ENCODE measurements at regions of chr17 and their contacts with region 1.

Region 1: GRCh38 chr17:39621523-39622379 is 5.0 kb upstream of the PPP1R1B start:
- DNase-seq: peak; percentile 87
- H3K4me3 ChIP-seq: no peak overlapping the region
- H3K27ac ChIP-seq: no peak overlapping the region
- H3K4me1 ChIP-seq: peaks cover 10% of the 10 kb centered on the region
- H3K27me3 ChIP-seq: peaks cover 24 to 26% of the 10 kb centered on the region in 2 experiments
- CTCF ChIP-seq: peak; percentile 100
- POLR2A ChIP-seq: no peak

Region 2: DNA sequence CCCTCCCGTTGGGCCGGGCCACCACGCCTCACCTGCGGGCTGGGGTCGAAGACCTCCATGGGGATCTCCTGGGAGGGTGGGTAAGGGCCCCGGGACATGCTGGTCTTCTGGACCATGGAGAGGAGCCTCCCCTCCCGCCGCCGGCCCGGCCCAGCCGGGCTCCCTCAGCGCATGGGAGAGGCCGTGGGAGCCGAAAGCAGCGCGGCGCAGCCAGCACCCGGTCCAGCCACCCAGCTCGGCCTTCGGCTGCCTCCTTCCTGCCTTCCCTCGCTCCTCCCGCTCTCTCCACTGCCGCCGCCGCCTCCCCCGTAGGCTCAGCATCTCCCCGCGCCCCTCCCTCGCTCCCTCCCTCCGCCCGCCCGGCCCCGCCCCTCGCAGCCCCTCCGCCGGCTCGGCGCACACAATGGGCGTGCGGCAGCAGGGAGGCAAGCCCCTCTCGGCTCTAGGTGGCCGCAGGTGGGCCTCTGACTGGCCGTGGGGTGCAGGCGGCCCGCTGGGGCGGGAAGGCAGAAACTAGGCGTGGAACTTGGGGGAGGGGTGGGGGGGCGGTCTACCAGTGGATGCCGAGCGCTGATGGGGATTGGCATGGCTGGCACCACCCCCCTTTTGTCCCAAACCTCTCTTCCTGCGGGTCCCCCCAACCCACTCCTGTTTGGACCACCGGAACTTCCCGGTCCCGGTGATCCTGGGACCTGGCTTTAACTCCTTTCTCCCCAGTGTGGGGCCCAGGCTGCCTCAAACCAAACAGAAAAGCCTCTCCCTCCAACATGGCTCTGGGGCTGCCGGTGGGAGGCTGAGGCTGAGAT is 424.2 kb before region 1 on chr17 and contains the start of gene CACNB1:
- CTCF ChIA-PET with region 1: no interaction called
- POLR2A ChIA-PET with region 1: no interaction called
- dilution Hi-C with region 1: no loop called
- intact Hi-C with region 1: no loop called
- DNase-seq: peak; percentile 69
- H3K4me3 ChIP-seq: peak within 1 kb of the TSS; percentile 58 to 74 (median 61)
- H3K27ac ChIP-seq: no peak within 1 kb of the TSS
- H3K4me1 ChIP-seq: peaks cover 23% of the 10 kb centered on the region
- H3K27me3 ChIP-seq: no peaks in the 10 kb centered on the region
- CTCF ChIP-seq: no peak
- POLR2A ChIP-seq: no peak
- total RNA-seq, gene CACNB1: 12.3 and 14.6 TPM in 2 replicates

Region 3: GRCh38 chr17:39538866-39539265 is 82.9 kb before region 1 on chr17:
- CTCF ChIA-PET with region 1: interaction called, 10 read pairs
- POLR2A ChIA-PET with region 1: no interaction called
- dilution Hi-C with region 1: no loop called
- intact Hi-C with region 1: no loop called
- DNase-seq: no peak
- H3K4me3 ChIP-seq: no peak overlapping the region
- H3K27ac ChIP-seq: no peak overlapping the region
- H3K4me1 ChIP-seq: peaks cover 10% of the 10 kb centered on the region
- H3K27me3 ChIP-seq: no peaks in the 10 kb centered on the region
- CTCF ChIP-seq: no peak
- POLR2A ChIP-seq: no peak

Region 4: GRCh38 chr17:39579318-39580081 is 42.3 kb before region 1 on chr17:
- CTCF ChIA-PET with region 1: interaction called, 23 read pairs
- POLR2A ChIA-PET with region 1: no interaction called
- dilution Hi-C with region 1: no loop called
- intact Hi-C with region 1: loop called (anchors 2 kb)
- DNase-seq: peak; percentile 39
- H3K4me3 ChIP-seq: no peak overlapping the region
- H3K27ac ChIP-seq: no peak overlapping the region
- H3K4me1 ChIP-seq: peaks cover 3% of the 10 kb centered on the region
- H3K27me3 ChIP-seq: peaks cover 8 to 10% of the 10 kb centered on the region in 2 experiments
- CTCF ChIP-seq: no peak
- POLR2A ChIP-seq: no peak

Region 5: GRCh38 chr17:39643271-39643670 is 21.5 kb after region 1 on chr17:
- CTCF ChIA-PET with region 1: interaction called, 114 read pairs
- POLR2A ChIA-PET with region 1: no interaction called
- dilution Hi-C with region 1: no loop called
- intact Hi-C with region 1: no loop called
- DNase-seq: peak; percentile 28
- H3K4me3 ChIP-seq: no peak overlapping the region
- H3K27ac ChIP-seq: no peak overlapping the region
- H3K4me1 ChIP-seq: peaks cover 11% of the 10 kb centered on the region
- H3K27me3 ChIP-seq: no peaks in the 10 kb centered on the region
- CTCF ChIP-seq: no peak
- POLR2A ChIP-seq: no peak

Region 6: DNA sequence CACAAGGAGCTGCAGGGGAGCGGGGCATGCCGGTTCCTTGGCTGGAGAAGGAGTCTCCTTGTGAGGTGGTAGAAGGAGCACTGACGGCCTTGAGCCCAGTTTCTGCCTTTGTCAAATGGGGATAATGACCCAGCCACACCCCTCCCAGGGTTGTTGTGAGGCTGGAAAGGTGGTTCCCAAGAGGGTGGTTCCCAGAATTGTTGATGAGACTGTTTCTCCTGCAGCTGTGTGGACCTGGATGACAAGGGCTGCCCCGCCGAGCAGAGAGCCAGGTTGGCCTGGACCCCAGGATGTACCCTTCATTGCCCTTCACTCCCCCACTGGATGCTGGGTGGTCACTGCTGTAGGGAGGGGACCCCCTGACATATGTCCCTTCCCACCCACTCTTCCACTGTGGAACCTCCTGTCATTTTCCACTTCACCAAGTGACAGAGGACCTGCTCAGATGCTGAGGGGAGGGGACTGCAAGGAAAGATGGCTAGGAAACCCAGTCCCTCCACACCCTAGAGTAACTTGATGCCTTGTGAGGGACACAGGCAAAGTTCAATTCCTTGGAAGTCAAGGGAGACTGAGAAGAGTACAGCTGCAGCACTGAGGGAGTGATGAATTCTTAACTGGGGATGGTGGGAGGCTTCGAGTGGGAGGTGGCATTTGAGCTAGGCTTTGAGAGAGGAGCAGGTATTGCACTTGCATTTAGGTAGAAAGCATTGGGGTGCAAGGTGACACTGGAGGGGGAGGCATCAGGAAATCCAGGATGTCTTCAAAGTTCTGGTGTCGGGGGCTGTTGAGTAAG is 98.0 kb after region 1 on chr17:
- CTCF ChIA-PET with region 1: interaction called, 25 read pairs
- POLR2A ChIA-PET with region 1: no interaction called
- dilution Hi-C with region 1: no loop called
- intact Hi-C with region 1: no loop called
- DNase-seq: no peak
- H3K4me3 ChIP-seq: no peak overlapping the region
- H3K27ac ChIP-seq: no peak overlapping the region
- H3K4me1 ChIP-seq: peaks cover 19% of the 10 kb centered on the region
- H3K27me3 ChIP-seq: no peaks in the 10 kb centered on the region
- CTCF ChIP-seq: no peak
- POLR2A ChIP-seq: no peak

Region 7: DNA sequence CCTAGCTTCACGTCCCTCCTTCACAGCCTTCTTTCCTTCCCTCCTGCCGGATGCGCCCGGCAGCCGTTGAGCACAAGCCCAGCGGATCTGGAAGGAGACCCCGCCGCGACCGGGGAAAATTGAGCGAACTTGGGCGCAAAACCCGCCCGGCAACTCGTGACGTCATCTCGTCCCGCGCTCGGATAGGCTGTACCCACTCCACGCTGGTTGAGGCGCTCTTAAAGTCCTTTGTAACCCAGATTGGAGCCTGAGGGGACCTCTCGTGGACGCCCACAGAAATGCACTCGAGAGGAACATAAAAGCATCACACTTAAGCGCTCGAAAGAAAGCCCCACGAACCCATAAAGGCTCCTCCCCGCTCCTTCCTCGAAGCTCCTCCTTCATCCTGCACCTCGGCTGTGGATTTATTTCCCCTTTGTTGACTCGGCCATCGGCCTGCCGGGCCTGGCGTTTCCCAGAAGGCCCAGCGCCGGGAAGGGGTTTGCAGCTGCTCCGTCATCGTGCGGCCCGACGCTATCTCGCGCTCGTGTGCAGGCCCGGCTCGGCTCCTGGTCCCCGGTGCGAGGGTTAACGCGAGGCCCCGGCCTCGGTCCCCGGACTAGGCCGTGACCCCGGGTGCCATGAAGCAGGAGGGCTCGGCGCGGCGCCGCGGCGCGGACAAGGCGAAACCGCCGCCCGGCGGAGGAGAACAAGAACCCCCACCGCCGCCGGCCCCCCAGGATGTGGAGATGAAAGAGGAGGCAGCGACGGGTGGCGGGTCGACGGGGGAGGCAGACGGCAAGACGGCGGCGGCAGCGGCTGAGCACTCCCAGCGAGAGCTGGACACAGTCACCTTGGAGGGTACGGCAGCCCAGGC is 358.8 kb after region 1 on chr17 and contains the start of gene PSMD3:
- CTCF ChIA-PET with region 1: interaction called, 10 read pairs
- POLR2A ChIA-PET with region 1: no interaction called
- dilution Hi-C with region 1: no loop called
- intact Hi-C with region 1: loop called (anchors 1 kb)
- DNase-seq: peak; percentile 100
- H3K4me3 ChIP-seq: peak within 1 kb of the TSS; percentile 84 to 100 (median 87)
- H3K27ac ChIP-seq: peak within 1 kb of the TSS; percentile 87
- H3K4me1 ChIP-seq: peaks cover 21% of the 10 kb centered on the region
- H3K27me3 ChIP-seq: peaks cover 6 to 16% of the 10 kb centered on the region in 2 experiments
- CTCF ChIP-seq: peak; percentile 73 to 77
- POLR2A ChIP-seq: peak; percentile 75
- total RNA-seq, gene PSMD3: 136 and 142 TPM in 2 replicates

Measured in endothelial cell of umbilical vein (primary cell).